ENCODE measurements at regions of chr1 and their contacts with region 1.

Region 1: DNA sequence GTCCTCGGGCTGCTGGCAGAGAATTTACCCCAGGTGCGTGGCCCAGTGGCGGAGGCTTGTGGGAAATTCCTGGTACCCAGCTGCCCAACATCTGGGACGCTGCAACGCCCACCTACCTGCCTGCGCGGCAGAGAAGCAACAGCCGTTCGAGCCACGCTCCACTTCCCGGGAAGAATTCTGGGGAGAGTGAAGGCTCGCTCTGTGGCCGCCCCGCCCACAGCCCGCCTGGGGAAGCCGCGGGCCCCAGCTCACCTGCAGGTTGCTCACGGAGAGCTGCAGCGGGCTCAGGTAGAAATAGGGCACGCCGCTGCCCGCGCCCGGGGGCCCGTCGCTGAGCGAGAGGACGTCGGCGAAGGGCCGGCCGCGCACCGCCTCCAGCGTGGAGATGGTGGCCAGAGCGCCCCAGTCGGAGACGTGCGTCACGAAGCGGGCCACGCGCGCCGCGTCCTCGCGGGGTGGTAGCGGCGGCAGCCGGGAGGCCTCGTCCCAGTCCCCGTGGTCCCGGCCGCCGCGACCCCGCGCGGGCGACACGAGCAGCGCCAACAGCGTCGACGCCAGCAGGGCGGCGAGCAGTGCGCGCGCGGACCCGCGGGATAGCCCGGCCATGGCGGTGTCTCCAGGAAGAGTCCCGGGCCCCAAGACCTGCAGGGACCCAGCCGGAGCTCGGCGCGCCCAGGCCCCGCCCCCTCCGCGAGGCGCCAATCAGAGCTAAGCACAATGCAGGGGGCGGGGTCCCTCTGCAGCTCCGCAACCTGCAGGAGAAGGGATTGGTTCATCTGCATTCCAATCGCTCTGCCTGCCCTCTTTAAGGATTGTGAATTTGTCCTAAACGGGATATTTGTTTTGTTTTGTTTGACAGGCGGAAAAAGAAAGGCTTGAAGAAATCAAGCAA is at the start of gene CREG1:
- DNase-seq: peak; percentile 98
- H3K4me3 ChIP-seq: peak within 1 kb of the TSS; percentile 67 to 71
- H3K27ac ChIP-seq: peak within 1 kb of the TSS in 1 of 2 experiments; percentile 51; a peak in 2 of 4 replicates
- H3K4me1 ChIP-seq: peaks cover 0 to 8% of the 10 kb centered on the region in 2 experiments; a peak in 2 of 4 replicates
- H3K27me3 ChIP-seq: no peaks in the 10 kb centered on the region
- CTCF ChIP-seq: no peak
- EP300 ChIP-seq: no peak
- RAD21 ChIP-seq: no peak
- polyA plus RNA-seq, gene CREG1: 26.1 and 37.0 TPM in 2 replicates

Region 2: DNA sequence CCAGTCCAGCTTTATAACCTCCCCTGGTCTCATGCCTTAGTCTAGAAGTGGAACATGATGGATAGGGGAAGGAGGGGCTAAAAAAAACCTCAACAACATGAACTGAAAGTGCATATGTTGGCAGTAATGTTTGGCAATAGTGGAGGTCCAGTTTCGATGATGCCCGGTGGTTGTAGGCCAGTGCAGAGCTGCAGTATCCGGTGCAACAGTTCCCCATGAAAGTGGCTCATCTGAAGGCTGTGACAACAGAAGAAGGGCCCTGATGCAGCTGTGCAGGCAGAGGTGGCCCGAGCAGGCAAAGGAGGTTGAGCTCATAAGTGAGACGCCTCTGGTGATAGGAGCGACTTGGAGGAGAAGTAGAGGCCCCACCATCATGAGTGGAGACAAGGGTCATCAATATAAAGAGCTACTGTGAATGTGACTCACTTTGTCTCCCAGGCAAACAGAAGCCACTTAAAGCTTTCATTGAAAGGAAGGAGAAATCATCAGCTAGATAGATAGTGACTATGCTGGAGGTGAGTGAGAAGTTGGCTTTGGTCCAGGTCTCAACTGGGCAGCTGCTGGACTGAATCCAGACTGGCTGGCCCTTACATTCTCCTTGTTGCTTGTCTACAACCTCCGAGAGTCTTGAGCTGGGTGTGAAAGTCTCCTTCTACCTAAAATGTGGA is 10.3 kb after region 1 on chr1:
- CTCF ChIA-PET with region 1: interaction called, 34 read pairs
- POLR2A ChIA-PET with region 1: interaction called, 6 read pairs
- DNase-seq: no peak
- H3K4me3 ChIP-seq: no peak overlapping the region
- H3K27ac ChIP-seq: no peak overlapping the region
- H3K4me1 ChIP-seq: peaks cover 0 to 4% of the 10 kb centered on the region in 2 experiments; a peak in 1 of 4 replicates
- H3K27me3 ChIP-seq: no peaks in the 10 kb centered on the region
- CTCF ChIP-seq: no peak
- EP300 ChIP-seq: no peak
- RAD21 ChIP-seq: no peak

Region 3: GRCh38 chr1:167697667-167698141 is 144.3 kb after region 1 on chr1:
- CTCF ChIA-PET with region 1: interaction called, 12 read pairs
- POLR2A ChIA-PET with region 1: no interaction called
- DNase-seq: no peak
- H3K4me3 ChIP-seq: no peak overlapping the region
- H3K27ac ChIP-seq: no peak overlapping the region
- H3K4me1 ChIP-seq: no peaks in the 10 kb centered on the region
- H3K27me3 ChIP-seq: no peaks in the 10 kb centered on the region; the same call in 1 of the 2 replicates
- CTCF ChIP-seq: no peak
- EP300 ChIP-seq: no peak
- RAD21 ChIP-seq: no peak

Measured in SK-N-SH (cell line).